ENCODE measurements at regions of chr6 and their contacts with region 1.

Region 1: DNA sequence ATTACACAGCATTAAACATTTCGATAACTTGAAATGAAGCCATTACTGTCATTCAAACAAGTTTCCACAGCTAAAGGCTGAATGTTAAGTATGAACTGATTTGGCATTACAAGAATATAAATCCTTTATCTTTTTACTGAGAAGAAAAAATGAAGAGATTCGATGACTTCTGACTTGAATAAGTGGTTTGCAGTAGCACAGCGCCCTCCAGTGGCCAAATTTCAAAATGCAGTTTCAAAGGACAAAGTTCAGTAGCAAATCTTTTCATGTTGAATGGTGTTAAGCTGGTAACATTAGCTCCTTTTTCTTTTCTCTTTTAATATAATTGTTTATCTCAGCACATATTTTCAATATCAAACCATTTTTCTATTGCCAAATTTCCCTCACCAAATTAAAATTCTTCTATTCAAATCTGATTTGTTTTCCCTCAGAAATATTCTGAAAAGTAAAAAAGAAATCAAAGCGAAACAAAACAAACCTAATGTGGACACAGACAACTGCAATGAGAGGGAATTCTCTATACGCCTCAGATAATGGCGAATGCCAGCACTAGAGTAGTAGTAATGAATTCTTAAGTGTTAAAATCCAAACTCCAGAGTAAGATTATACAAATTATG is 145.7 kb downstream of the BTBD9 start:
- DNase-seq: peak; percentile 90
- ATAC-seq: 0 out of 2 replicates have a peak, but pooled peaks have one; percentile 40
- H3K4me3 ChIP-seq: no peak overlapping the region
- H3K27ac ChIP-seq: no peak overlapping the region
- H3K4me1 ChIP-seq: no peaks in the 10 kb centered on the region
- H3K27me3 ChIP-seq: no peaks in the 10 kb centered on the region
- CTCF ChIP-seq: peak; percentile 95

Region 2: DNA sequence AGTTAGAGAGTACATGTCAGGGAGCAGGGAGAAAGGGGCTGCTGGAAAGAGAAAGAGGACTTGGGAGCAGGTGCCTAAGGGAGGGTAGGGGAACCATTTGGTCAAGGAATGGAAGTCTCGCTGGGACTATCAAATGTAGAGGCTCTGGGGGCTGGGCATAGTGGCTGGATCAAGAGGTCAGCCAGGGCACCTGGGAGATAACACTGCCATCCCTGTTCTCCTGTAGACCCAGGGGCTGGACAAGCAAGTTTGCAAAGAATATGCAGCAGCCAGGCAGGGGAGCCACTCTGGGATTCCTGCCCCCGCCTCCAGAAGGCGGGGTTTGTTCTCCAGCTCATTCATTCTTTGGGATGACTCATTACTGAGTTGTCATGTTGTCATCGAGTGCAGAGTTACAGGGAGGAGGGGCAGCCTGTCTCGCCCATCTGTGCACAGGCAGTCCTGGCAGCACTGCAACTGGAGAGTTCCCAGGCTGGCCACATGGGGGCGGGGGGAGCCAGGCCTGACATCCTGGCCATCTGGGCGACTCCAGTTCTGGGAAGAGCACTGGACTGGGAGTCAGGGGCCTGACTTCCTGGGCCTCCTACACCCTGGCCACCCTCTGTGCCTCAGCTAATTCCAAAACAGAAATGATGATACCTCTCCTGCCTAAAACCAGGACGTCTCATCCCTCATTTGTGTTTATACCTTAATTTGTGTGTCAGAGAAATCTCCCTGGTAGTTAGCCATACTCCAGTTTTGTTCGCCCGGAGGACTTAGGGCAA is 702.7 kb before region 1 on chr6:
- CTCF ChIA-PET with region 1: no interaction called
- POLR2A ChIA-PET with region 1: no interaction called
- intact Hi-C with region 1: loop called (anchors 1 kb)
- DNase-seq: peak; percentile 98
- ATAC-seq: peak; percentile 97
- H3K4me3 ChIP-seq: no peak overlapping the region
- H3K27ac ChIP-seq: no peak overlapping the region
- H3K4me1 ChIP-seq: peaks cover 23% of the 10 kb centered on the region
- H3K27me3 ChIP-seq: no peaks in the 10 kb centered on the region
- CTCF ChIP-seq: peak; percentile 94

Region 3: DNA sequence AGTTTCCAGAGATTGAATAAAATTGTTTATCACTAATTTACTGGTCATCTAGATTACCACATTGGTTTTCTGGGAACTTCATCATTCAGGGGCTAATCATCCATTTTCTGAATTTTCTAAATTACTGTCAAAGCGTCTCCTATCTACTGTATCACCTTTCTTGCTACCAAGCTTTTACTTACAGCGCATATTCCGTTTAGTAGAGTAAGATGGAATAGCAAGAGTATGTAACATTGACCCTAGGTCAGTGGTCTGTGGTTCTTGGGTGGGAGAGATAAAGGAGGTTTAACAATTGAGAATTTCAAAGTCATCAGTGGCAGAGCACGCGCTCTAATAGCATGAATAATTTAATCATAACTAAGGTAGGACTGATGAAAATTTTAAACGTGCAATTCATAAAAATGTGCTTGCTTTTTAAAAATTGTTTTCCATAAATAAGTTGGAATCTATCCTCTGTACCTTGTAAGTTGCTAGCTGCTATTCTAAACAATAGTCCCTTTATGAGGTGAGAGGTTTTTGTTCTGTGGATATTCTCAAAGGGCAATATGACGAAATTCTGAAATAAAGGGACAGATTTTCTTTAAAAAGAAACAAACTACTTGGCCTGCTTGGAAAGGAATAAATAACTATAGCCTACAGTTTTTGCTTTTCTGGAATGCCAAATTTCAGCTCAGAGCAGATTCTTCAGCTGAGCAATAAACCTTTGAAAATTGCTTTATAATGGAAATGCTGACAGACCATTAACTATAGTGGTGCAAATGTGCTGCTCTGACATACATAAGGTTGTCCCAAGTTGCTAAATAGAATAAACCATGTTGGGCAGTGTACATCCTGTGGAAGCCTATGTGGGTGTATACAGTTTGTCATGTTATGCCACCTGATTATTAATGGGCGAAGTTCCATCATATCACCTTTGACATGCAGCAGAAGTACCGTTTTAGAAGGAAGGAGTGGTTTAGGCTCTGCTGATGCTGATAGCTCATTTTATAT is 590.4 kb before region 1 on chr6:
- CTCF ChIA-PET with region 1: no interaction called
- POLR2A ChIA-PET with region 1: no interaction called
- intact Hi-C with region 1: no loop called
- DNase-seq: no peak
- ATAC-seq: no peak
- H3K4me3 ChIP-seq: no peak overlapping the region
- H3K27ac ChIP-seq: no peak overlapping the region
- H3K4me1 ChIP-seq: no peaks in the 10 kb centered on the region
- H3K27me3 ChIP-seq: no peaks in the 10 kb centered on the region
- CTCF ChIP-seq: no peak

Region 4: GRCh38 chr6:38155144-38155543 is 338.9 kb before region 1 on chr6:
- CTCF ChIA-PET with region 1: no interaction called
- POLR2A ChIA-PET with region 1: no interaction called
- intact Hi-C with region 1: loop called (anchors 10 kb)
- DNase-seq: no peak
- ATAC-seq: peak; percentile 37
- H3K4me3 ChIP-seq: no peak overlapping the region
- H3K27ac ChIP-seq: peak overlapping the region; percentile 73
- H3K4me1 ChIP-seq: peaks cover 23% of the 10 kb centered on the region
- H3K27me3 ChIP-seq: no peaks in the 10 kb centered on the region
- CTCF ChIP-seq: no peak

Region 5: GRCh38 chr6:38460186-38460585 is 33.9 kb before region 1 on chr6:
- CTCF ChIA-PET with region 1: no interaction called
- POLR2A ChIA-PET with region 1: no interaction called
- intact Hi-C with region 1: no loop called
- DNase-seq: peak; percentile 40
- ATAC-seq: no peak
- H3K4me3 ChIP-seq: no peak overlapping the region
- H3K27ac ChIP-seq: no peak overlapping the region
- H3K4me1 ChIP-seq: peaks cover 7% of the 10 kb centered on the region; the same call in 1 of the 2 replicates
- H3K27me3 ChIP-seq: no peaks in the 10 kb centered on the region
- CTCF ChIP-seq: no peak

Region 6: DNA sequence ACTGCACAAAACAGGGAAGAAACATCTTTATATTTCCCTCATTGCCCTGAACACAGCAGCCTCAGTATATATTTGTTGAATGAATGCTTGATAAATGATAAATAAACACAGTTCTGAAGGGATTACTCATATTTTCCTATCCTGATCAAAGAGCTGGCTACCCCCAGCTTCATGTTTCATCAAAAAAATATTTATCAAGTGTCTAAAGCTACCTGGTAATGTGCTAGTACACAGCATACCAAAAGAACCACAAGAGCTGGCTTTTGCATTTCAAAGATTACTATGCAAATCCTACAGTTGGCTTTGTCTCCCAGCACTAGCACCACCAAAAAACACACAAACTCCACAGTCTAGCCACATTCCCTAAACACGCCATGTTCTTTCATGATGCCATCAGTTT is 15.7 kb after region 1 on chr6:
- CTCF ChIA-PET with region 1: interaction called, 4 read pairs
- POLR2A ChIA-PET with region 1: interaction called, 10 read pairs
- intact Hi-C with region 1: no loop called
- DNase-seq: peak; percentile 77
- ATAC-seq: peak; percentile 48
- H3K4me3 ChIP-seq: no peak overlapping the region
- H3K27ac ChIP-seq: peak overlapping the region; percentile 42
- H3K4me1 ChIP-seq: peaks cover 31% of the 10 kb centered on the region
- H3K27me3 ChIP-seq: no peaks in the 10 kb centered on the region
- CTCF ChIP-seq: no peak

Region 7: DNA sequence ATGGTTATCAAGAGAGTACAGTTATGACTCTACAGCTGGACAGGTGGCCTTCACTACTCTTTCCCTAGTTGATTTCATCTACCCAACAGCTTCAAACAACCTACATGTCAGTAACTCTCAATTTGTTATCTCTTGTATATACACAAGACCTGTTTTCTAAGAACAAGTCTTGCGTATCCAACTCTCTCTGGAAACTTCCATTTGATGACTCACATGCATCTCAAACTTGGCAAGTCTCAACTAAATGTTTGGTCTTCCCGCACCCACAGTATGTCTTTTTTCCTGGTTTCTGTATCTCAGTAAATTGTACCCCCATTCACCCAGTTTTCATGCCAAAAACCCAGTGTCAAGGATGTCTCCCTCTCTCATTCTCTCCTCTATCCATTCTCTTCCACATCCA is 48.0 kb after region 1 on chr6:
- CTCF ChIA-PET with region 1: no interaction called
- POLR2A ChIA-PET with region 1: no interaction called
- intact Hi-C with region 1: no loop called
- DNase-seq: peak; percentile 34
- ATAC-seq: no peak
- H3K4me3 ChIP-seq: no peak overlapping the region
- H3K27ac ChIP-seq: no peak overlapping the region
- H3K4me1 ChIP-seq: no peaks in the 10 kb centered on the region
- H3K27me3 ChIP-seq: no peaks in the 10 kb centered on the region
- CTCF ChIP-seq: no peak

Region 8: GRCh38 chr6:38671885-38672467 is 177.9 kb after region 1 on chr6:
- CTCF ChIA-PET with region 1: no interaction called
- POLR2A ChIA-PET with region 1: no interaction called
- intact Hi-C with region 1: loop called (anchors 2 kb)
- DNase-seq: peak; percentile 78
- ATAC-seq: peak; percentile 93
- H3K4me3 ChIP-seq: no peak overlapping the region
- H3K27ac ChIP-seq: no peak overlapping the region
- H3K4me1 ChIP-seq: no peaks in the 10 kb centered on the region
- H3K27me3 ChIP-seq: no peaks in the 10 kb centered on the region
- CTCF ChIP-seq: peak; percentile 89

Measured in PC-3 (cell line).